ENCODE measurements at regions of chr17 and their contacts with region 1.

Region 1: DNA sequence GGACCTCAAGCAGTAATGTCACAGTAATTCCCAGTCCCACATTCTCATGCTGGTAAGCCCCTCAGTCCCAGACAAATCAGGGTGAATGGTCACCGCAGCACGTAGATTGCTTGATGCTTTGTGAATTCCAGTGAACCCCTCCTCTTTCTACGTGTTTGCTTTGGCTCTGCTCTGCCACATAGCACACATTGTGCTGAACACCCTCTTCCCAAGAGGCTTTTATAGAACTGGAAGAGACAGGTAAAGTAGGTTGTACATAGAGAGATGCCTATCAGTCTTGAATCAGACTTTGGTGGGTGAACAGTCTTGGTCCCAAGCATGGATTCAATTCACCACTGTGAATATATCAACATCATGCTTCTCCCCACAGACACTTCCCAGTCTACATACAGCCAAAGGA is 579 bp upstream of the KRTAP9-6 start:
- DNase-seq: no peak
- ATAC-seq: no peak
- H3K4me3 ChIP-seq: no peak overlapping the region
- H3K27ac ChIP-seq: no peak overlapping the region
- H3K4me1 ChIP-seq: no peaks in the 10 kb centered on the region
- H3K27me3 ChIP-seq: no peaks in the 10 kb centered on the region
- CTCF ChIP-seq: no peak
- POLR2A ChIP-seq: no peak
- RAD21 ChIP-seq: no peak

Region 2: GRCh38 chr17:41251261-41251660 is 13.3 kb before region 1 on chr17:
- CTCF ChIA-PET with region 1: no interaction called
- POLR2A ChIA-PET with region 1: no interaction called
- RAD21 ChIA-PET with region 1: no interaction called
- intact Hi-C with region 1: no loop called
- DNase-seq: no peak
- ATAC-seq: no peak
- H3K4me3 ChIP-seq: no peak overlapping the region
- H3K27ac ChIP-seq: no peak overlapping the region
- H3K4me1 ChIP-seq: no peaks in the 10 kb centered on the region
- H3K27me3 ChIP-seq: no peaks in the 10 kb centered on the region
- CTCF ChIP-seq: no peak
- POLR2A ChIP-seq: no peak
- RAD21 ChIP-seq: no peak

Region 3: DNA sequence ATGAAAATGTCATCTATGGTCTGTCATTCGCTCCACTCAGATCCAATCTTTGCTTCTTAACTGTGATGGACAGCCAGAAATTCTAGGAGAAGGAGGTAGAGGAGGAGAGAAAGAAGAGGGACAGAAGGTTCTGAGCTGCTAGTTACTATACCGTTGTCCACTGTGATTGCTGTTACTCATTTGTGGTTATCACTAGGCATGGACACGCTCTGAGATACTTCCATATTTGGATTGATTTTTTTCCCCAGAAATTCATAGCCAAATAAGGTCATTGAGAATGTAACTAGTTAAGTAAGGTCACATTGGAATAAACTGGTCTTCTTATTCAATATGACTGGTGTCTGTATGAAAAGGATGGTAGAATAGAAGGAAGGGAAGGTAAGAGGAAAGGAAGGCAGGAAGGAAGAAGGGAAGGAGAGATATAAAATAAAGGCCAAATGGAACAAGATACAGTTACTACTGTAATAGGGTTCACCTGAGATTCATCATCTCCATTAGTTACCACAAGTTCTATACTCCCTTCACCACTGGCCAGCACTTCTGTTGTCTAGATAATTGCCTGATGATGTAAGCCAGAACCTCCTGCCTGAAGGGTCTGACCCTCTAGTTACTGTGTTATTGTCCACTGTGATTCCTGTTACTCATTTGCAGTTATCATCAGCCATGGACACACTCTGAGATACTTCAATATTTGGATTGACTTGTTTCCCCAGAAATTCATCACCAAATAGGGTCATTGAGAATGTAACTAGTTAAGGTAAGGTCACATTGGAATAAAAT is 13.8 kb after region 1 on chr17:
- CTCF ChIA-PET with region 1: no interaction called
- POLR2A ChIA-PET with region 1: no interaction called
- RAD21 ChIA-PET with region 1: no interaction called
- intact Hi-C with region 1: loop called (anchors 1 kb)
- DNase-seq: no peak
- ATAC-seq: no peak
- H3K4me3 ChIP-seq: no peak overlapping the region
- H3K27ac ChIP-seq: no peak overlapping the region
- H3K4me1 ChIP-seq: no peaks in the 10 kb centered on the region
- H3K27me3 ChIP-seq: no peaks in the 10 kb centered on the region
- CTCF ChIP-seq: no peak
- POLR2A ChIP-seq: no peak
- RAD21 ChIP-seq: no peak

Measured in HCT116 (cell line).